ENCODE measurements at regions of chr1 and their contacts with region 1.

Region 1: DNA sequence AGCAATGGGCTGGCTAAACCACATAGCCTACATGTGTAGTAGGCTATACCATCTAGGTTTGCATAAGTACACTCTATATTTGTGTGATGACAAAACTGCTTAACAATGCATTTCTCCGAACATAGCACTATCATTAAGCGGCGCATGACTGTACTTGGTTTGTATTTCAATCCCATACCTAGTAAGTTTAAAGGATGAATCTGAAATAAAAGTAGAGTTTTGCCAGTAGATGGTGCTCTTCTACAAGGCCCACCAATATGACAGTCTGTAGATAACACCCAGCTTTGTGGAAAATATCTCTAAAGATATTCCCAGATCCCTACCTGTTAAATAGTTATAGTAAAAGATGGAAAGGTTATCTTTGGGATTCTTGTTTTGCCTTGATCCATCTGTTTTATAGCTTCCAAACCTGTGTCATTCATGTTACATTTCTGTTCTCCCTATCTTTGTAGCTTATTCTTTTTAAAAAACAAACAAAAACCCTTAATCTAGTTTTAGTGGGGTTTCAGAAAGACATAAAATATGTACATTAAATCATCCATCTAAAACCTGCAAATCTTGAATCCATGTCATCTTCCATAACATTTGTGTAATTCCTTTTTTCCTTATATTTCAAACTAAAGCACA is 33.9 kb upstream of the ASPM start:
- DNase-seq: no peak
- ATAC-seq: no peak

Region 2: DNA sequence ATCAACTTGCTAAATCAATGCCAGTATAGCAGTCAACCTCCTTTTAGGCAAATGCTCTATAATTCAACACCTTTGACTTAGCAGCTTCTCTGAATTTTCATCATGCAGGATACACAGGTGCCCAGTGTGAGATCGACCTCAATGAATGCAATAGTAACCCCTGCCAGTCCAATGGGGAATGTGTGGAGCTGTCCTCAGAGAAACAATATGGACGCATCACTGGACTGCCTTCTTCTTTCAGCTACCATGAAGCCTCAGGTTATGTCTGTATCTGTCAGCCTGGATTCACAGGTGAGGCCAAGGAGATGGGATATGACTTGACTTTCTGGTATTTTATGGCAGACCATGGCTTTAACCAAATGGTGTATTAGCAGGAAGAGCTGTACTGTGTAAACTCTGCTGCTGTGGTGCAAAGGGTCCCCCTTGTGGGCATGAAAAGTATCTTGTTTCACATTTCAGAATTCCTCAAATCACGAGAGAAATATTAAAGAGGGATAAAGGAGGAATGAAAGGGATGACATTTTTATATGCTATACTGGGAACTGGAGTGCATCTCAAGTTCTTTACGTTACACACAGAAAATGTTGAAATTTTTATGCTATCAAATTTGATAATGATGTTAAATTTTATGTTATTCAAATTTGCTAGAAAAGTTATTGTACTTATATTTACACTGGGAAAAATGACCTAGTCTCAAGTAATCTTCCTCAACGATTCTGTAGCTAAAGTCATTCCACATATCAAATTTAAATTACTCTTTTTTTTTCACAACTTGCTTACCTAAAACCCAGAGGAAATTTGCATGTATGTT is 176.6 kb after region 1 on chr1:
- intact Hi-C with region 1: loop called (anchors 5 kb)
- DNase-seq: no peak
- ATAC-seq: peak; percentile 71